Common myeloid progenitor, CD34-positive (primary cell): ENCODE measurements at regions of chr4 and their contacts with region 1.

Region 1: DNA sequence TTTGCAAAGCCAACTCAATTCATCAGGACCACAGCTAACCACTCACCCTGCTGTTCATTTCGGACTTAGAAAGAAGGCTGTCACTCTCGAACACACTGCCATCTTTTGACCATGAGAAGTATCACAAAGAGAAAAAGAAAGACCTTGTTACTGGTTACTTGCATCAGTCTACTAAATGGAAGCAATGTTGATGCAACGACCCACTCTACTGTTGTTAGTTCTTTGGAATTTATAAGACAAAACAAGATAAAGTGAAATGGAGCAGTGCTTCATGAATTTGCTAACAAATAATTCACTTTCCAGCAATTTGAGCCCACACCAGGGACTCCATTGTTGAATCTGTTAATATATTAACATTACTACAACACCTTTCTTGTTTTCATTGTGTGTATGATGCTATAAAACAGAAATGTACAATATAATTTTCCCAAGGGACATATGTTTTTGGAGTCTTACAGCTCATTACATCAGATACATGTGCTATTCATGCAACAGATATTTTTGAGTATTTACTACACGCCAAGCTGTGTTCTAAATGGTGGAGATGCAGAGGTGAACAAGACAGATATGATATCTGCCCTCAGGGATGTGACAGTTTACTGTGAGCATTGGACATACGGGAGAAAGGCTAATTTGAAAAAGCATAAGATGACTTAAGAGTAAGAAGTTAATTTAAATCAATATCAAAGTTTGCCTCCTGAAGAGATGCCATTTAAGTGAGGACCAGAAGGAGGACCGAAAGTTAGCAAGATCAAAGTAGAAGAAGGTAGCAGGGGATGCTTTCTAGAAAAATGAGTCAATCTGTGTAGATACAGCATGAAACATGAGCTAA is 87.2 kb downstream of the AREG start:
- DNase-seq: peak; percentile 69 to 76 (median 75)
- H3K4me3 ChIP-seq: no peak overlapping the region
- H3K27ac ChIP-seq: no peak overlapping the region
- H3K4me1 ChIP-seq: no peaks in the 10 kb centered on the region
- H3K27me3 ChIP-seq: no peaks in the 10 kb centered on the region

Region 2: GRCh38 chr4:74320559-74321118 is 211.5 kb before region 1 on chr4:
- CTCF ChIA-PET with region 1: interaction called, 105 read pairs
- POLR2A ChIA-PET with region 1: no interaction called
- DNase-seq: peak; percentile 85 to 92 (median 92)
- H3K4me3 ChIP-seq: peak overlapping the region in 4 of 7 experiments; percentile 8 to 68 (median 44)
- H3K27ac ChIP-seq: peak overlapping the region in 1 of 2 experiments; percentile 29
- H3K4me1 ChIP-seq: peaks cover 4 to 78% (median 34%) of the 10 kb centered on the region in 4 experiments
- H3K27me3 ChIP-seq: no peaks in the 10 kb centered on the region

Region 3: DNA sequence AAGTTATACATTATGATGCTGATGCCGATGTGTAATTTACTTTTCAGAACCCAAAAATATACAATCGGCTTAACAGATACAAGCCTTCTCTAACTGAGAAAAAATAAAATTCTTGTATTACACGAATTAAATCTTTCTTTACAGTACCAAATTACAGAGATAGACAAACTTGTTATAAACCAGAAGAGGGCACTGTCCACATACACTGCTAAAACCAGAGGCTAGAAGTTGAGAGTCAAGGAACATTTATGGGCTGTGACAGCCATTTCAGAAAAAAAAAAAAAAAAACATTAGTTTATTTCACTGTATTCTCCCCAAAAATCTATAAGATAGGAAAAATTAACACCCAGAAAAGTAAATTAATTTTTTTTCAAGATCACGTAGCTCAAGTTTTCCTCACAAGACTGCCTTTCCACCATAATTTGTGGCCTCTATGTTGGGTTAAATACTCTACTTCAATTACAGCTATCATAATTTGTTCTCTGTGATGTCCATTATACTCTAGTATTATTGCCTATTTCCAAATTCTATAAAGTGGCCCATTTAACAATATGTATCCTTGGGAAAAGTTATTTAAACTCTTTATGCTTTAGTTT is 155.2 kb before region 1 on chr4:
- CTCF ChIA-PET with region 1: interaction called, 87 read pairs
- POLR2A ChIA-PET with region 1: no interaction called
- DNase-seq: peak; percentile 65 to 82 (median 81)
- H3K4me3 ChIP-seq: no peak overlapping the region
- H3K27ac ChIP-seq: peak overlapping the region in 1 of 2 experiments; percentile 5
- H3K4me1 ChIP-seq: peaks cover 0 to 24% (median 6%) of the 10 kb centered on the region in 4 experiments
- H3K27me3 ChIP-seq: no peaks in the 10 kb centered on the region

Region 4: GRCh38 chr4:74490736-74491135 is 41.4 kb before region 1 on chr4:
- CTCF ChIA-PET with region 1: no interaction called
- POLR2A ChIA-PET with region 1: no interaction called
- DNase-seq: no peak
- H3K4me3 ChIP-seq: no peak overlapping the region
- H3K27ac ChIP-seq: no peak overlapping the region
- H3K4me1 ChIP-seq: no peaks in the 10 kb centered on the region
- H3K27me3 ChIP-seq: no peaks in the 10 kb centered on the region

Region 5: GRCh38 chr4:74516321-74516720 is 15.9 kb before region 1 on chr4:
- CTCF ChIA-PET with region 1: interaction called, 13 read pairs
- POLR2A ChIA-PET with region 1: no interaction called
- DNase-seq: no peak
- H3K4me3 ChIP-seq: no peak overlapping the region
- H3K27ac ChIP-seq: no peak overlapping the region
- H3K4me1 ChIP-seq: no peaks in the 10 kb centered on the region
- H3K27me3 ChIP-seq: no peaks in the 10 kb centered on the region

Region 6: DNA sequence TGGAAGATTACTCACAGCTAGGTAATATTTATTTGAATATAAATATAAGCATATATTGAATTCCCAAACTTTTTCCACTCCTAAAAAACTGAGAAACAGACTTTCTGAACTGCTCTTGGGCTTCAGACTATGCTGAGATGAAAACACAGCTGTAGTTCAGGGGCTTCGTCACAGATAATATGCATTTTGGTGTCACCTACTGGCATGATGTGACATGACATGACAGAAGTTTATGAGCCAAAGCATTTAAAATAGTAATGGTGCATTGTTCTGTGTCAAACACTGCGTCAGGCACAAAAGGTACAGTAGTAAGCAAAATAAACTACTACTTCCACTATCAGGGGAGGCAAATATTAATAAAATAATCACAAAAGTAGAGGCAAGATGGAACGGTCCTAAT is 90.9 kb after region 1 on chr4:
- CTCF ChIA-PET with region 1: interaction called, 55 read pairs
- POLR2A ChIA-PET with region 1: no interaction called
- DNase-seq: peak; percentile 68 to 85 (median 80)
- H3K4me3 ChIP-seq: no peak overlapping the region
- H3K27ac ChIP-seq: no peak overlapping the region
- H3K4me1 ChIP-seq: peaks cover 6 to 42% (median 17%) of the 10 kb centered on the region in 4 experiments
- H3K27me3 ChIP-seq: no peaks in the 10 kb centered on the region

Region 7: DNA sequence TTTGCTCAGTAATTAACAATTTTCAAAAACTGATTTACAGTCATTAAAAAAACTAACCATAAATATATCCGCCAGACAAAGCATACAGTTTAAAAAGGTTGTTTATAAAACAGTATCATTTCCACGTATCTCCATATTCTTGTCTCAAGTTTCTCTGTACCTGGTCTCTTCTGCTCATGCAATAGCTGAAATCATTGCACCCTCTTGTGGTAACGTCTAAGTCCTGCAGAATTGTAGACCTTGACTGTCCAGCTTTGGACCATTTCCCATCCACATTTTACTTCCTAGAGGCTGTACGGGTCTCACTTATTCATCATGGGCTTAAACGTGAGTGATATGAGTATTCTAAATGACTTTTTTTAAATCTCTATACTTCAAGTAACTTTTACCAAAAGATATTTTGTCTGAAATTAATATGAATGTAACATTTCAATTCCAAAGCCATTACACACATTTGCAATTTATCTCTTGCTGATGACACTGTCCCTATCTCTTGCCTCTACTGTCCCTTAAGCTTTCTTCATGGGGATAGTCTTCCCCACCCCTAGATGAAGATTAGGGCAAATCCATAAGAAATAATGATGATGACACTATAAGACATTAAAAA is 143.6 kb after region 1 on chr4:
- CTCF ChIA-PET with region 1: interaction called, 66 read pairs
- POLR2A ChIA-PET with region 1: no interaction called
- DNase-seq: peak; percentile 65 to 77 (median 75)
- H3K4me3 ChIP-seq: no peak overlapping the region
- H3K27ac ChIP-seq: no peak overlapping the region
- H3K4me1 ChIP-seq: peaks cover 0 to 8% (median 4%) of the 10 kb centered on the region in 4 experiments
- H3K27me3 ChIP-seq: no peaks in the 10 kb centered on the region